ENCODE measurements at regions of chr9 and their contacts with region 1.

Region 1: DNA sequence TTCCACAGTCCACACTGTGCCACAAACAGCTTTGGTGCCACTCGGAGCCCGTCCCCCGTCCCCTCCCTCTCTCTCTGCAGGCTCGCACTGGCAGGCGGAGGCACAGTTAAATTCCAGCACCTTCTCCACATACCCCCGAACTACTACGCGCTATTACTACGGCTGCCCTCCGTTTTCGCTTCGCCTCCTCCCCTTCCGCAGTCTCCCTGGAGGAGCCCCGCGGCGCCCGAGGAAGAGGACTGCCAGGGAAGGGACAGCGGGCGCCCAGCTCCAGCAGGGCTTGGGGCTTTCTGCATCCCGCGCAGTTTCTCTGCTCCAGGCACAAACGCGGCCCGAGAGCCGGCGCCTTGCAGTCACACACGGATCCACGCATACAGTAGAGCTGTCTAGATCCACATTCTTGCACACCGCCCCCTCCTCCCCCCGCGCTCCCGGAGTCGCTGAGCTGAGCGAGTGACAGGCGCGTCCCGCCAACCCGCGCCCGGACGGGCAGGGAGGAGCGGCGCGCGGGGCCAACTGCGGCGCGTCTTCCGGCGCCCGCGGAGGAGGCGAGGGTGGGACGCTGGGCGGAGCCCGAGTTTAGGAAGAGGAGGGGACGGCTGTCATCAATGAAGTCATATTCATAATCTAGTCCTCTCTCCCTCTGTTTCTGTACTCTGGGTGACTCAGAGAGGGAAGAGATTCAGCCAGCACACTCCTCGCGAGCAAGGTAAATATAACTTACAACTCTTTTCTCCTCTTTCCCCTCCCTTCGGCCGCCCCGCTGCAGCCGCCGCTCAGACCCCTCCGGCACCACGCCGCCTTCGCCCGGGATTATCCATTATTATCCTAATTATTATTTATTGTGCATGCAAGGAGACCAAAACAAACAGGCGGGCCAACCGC is at the start of gene SMARCA2:
- DNase-seq: peak; percentile 98
- H3K4me3 ChIP-seq: peak within 1 kb of the TSS; percentile 83 to 95 (median 88)
- H3K27ac ChIP-seq: peak within 1 kb of the TSS; percentile 95 to 100 (median 98)
- H3K4me1 ChIP-seq: peaks cover 28 to 33% (median 31%) of the 10 kb centered on the region in 4 donors
- H3K27me3 ChIP-seq: no peaks in the 10 kb centered on the region
- CTCF ChIP-seq: no peak
- EP300 ChIP-seq: no peak
- POLR2A ChIP-seq: peak; percentile 82
- total RNA-seq, gene SMARCA2: 76.7 to 99.0 (median 89.8) TPM

Region 2: DNA sequence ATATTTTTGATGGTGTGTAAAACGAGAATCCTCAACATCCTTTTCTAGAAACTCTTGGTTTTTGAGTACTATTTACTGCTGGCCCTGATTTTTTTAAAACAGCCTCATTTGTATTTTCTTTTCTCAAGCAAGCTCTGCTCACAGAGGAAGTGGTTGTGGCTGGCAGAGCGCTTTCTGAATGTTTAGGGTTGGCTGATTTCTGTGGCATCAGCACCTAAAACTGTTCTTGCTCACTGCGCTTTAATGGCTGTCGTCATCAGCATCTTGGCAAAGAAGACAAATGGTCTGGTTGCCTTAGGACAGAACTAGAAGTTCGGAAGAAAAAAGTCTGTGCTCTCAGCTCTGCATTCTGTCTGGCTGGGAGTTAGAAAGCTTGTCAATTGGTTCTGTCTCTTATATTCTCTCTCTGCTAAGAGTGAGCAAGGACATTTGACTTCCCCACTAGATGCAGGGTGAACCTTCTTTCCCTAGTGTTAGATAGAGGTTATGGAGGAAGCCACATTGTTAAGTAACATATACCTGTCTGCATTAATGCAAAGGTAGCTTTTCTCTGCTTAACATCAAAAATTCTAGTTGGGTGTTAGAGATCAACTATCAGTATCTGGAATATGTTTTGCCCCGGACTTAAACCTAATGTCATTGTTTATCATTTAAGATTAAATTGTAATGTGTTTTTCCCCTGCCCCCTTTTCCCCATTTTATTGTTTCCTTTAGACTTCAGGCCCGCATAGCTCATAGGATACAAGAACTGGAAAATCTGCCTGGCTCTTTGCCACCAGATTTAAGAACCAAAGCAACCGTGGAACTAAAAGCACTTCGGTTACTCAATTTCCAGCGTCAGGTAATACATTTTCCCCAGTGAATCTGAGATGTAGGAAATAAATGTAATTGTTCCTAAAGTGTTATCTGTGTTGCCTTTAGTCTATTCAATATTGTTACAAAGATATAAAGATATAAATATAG is 39.2 kb after region 1 on chr9:
- intact Hi-C with region 1: loop called (anchors 5 kb)
- DNase-seq: no peak
- H3K4me3 ChIP-seq: no peak overlapping the region
- H3K27ac ChIP-seq: peak overlapping the region; percentile 39 to 67 (median 63)
- H3K4me1 ChIP-seq: peaks cover 1 to 49% (median 43%) of the 10 kb centered on the region in 4 donors
- H3K27me3 ChIP-seq: no peaks in the 10 kb centered on the region
- CTCF ChIP-seq: no peak
- EP300 ChIP-seq: no peak
- POLR2A ChIP-seq: no peak

Region 3: GRCh38 chr9:2125906-2126305 is 111.0 kb after region 1 on chr9:
- intact Hi-C with region 1: loop called (anchors 10 kb)
- DNase-seq: no peak
- H3K4me3 ChIP-seq: peak overlapping the region in 3 of 4 donors; percentile 20 to 34 (median 25)
- H3K27ac ChIP-seq: peak overlapping the region; percentile 80 to 83 (median 82)
- H3K4me1 ChIP-seq: peaks cover 55 to 82% (median 74%) of the 10 kb centered on the region in 4 donors
- H3K27me3 ChIP-seq: no peaks in the 10 kb centered on the region
- CTCF ChIP-seq: no peak
- EP300 ChIP-seq: no peak
- POLR2A ChIP-seq: no peak

Region 4: DNA sequence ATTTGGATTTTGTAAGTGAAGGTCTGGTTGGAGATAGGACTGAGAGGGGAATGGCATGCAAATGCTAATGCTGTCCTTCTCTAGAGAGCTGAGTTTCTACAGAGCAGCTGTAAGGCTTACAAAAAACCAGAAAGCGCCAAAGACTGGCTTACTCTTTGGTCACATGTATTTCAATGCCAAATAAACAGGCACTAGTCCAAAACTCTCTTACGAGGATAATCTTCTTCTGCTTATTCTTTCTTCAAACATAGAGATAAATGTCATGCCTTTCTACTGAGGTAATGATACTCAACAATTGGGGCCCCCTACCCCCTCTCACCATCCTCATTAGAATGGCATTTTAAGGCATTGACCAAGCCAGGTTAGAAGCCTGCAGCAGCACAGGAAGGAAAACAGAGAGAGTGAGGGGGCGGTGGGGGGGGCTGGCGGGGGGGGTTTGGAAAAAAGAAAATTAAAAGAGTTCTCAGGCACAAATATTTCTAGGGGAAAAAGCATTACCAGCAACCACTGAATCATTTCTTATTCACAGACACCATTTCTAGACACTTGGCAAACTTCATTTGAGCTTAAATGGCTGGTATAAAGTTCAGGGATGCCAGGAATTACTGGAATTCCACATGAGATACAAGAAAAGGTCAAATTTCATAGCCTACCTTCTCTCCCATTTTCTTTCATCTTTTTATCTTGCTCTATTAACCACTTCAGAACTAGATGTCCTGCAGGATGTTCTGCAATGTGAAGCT is 794.9 kb after region 1 on chr9:
- intact Hi-C with region 1: loop called (anchors 10 kb)
- DNase-seq: no peak
- H3K4me3 ChIP-seq: peak overlapping the region in 1 of 4 donors; percentile 10
- H3K27ac ChIP-seq: peak overlapping the region; percentile 58 to 75 (median 66)
- H3K4me1 ChIP-seq: peaks cover 25 to 36% (median 34%) of the 10 kb centered on the region in 4 donors
- H3K27me3 ChIP-seq: no peaks in the 10 kb centered on the region
- CTCF ChIP-seq: no peak
- EP300 ChIP-seq: no peak
- POLR2A ChIP-seq: no peak

Measured in esophagus muscularis mucosa (tissue), 4 donors.